Endothelial cell of umbilical vein (primary cell): ENCODE measurements at regions of chr2 and their contacts with region 1.

Region 1: DNA sequence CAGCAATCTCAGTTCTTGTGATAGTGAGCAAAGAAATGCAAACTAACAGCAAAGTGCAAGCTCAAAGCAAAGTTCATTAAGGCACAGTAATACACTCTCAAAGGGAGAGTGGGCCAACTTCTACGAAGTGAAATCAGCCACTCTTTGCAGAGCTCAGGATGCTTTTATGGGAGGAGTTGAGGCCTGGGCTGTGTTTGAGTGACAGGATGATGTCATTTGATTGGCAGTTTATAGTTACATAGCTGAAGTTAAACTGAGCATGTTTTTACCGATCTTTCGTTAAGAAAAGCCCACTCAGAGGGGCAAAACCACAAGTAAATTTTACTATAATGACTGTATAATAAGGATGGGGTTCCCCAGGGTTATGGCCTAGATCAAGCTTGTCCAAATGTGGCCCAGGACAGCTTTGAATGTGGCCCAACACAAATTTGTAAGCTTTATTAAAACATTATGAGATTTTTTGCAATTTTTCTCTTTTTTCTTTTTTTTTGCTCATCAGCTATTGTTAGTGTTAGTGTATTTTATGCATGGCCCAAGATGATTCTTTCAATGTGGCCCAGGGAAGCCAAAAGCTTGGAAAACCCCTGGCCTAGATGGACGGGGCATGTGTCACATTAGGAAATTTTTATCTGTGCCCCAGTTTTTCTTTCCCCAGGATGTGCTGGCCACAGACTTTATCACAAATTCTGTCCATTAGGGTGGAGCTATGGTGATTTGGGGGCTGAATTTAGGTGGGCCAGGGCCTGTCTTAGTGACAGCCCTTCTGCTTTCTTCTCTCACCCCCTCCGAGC is 8.3 kb upstream of the DNAH7 start:
- DNase-seq: no peak
- H3K4me3 ChIP-seq: no peak overlapping the region
- H3K27ac ChIP-seq: no peak overlapping the region
- H3K4me1 ChIP-seq: no peaks in the 10 kb centered on the region
- H3K27me3 ChIP-seq: peaks cover 7 to 12% of the 10 kb centered on the region in 2 experiments
- CTCF ChIP-seq: no peak
- POLR2A ChIP-seq: no peak

Region 2: DNA sequence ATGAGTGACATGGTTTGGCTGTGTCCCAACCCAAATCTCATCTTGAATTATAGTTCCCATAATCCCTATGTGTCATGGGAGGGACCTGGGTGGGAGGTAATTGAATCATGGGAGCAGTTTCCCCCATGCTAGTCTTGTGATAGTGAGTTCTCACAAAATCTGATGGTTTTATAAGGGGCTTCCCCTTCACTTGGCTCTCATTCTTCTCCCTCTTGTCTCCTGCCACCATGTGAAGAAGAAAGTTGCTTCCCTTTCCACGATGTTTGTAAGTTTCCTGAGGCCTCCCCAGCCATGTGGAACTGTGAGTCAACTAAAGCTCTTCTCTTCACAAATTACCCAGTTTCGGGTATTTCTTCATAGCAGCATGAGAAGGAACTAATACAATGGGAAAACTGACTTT is 22.3 kb before region 1 on chr2:
- CTCF ChIA-PET with region 1: no interaction called
- POLR2A ChIA-PET with region 1: no interaction called
- dilution Hi-C with region 1: no loop called
- intact Hi-C with region 1: no loop called
- DNase-seq: no peak
- H3K4me3 ChIP-seq: no peak overlapping the region
- H3K27ac ChIP-seq: no peak overlapping the region
- H3K4me1 ChIP-seq: no peaks in the 10 kb centered on the region
- H3K27me3 ChIP-seq: peaks cover 8 to 16% of the 10 kb centered on the region in 2 experiments
- CTCF ChIP-seq: no peak
- POLR2A ChIP-seq: no peak

Region 3: DNA sequence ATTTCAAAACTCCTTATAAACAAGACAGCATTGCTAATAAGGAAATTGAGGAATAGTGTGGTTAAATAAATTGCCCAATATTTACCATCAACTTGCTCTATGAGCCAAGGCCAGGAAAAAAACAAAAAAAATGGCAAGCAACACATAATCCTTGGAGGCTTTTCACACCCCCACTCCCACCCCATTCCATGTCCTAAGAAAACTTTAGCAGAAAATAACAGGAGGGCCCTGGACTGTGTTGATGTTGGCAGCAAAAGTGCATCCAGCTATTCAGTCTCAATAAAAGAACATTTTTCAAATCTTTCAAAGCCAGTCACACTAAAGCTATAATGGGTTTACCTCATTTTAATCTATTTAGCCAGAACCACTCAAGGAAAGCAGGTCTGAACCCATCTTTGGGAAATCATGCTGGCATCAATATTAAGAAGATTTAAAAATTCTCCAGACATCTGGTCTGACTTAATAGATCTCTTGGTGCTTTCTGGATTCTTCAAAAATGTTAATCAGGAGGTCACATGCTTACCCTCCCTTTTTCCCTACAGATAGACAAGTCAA is 129.0 kb after region 1 on chr2:
- CTCF ChIA-PET with region 1: interaction called, 21 read pairs
- POLR2A ChIA-PET with region 1: no interaction called
- dilution Hi-C with region 1: no loop called
- intact Hi-C with region 1: no loop called
- DNase-seq: peak; percentile 58
- H3K4me3 ChIP-seq: no peak overlapping the region
- H3K27ac ChIP-seq: no peak overlapping the region
- H3K4me1 ChIP-seq: peaks cover 20% of the 10 kb centered on the region
- H3K27me3 ChIP-seq: no peaks in the 10 kb centered on the region
- CTCF ChIP-seq: no peak
- POLR2A ChIP-seq: no peak

Region 4: GRCh38 chr2:196233021-196233804 is 156.2 kb after region 1 on chr2:
- CTCF ChIA-PET with region 1: interaction called, 15 read pairs
- POLR2A ChIA-PET with region 1: no interaction called
- dilution Hi-C with region 1: no loop called
- intact Hi-C with region 1: no loop called
- DNase-seq: peak; percentile 93
- H3K4me3 ChIP-seq: peak overlapping the region in 1 of 3 experiments; percentile 2
- H3K27ac ChIP-seq: peak overlapping the region; percentile 96
- H3K4me1 ChIP-seq: peaks cover 32% of the 10 kb centered on the region
- H3K27me3 ChIP-seq: no peaks in the 10 kb centered on the region
- CTCF ChIP-seq: no peak
- POLR2A ChIP-seq: no peak

Region 5: DNA sequence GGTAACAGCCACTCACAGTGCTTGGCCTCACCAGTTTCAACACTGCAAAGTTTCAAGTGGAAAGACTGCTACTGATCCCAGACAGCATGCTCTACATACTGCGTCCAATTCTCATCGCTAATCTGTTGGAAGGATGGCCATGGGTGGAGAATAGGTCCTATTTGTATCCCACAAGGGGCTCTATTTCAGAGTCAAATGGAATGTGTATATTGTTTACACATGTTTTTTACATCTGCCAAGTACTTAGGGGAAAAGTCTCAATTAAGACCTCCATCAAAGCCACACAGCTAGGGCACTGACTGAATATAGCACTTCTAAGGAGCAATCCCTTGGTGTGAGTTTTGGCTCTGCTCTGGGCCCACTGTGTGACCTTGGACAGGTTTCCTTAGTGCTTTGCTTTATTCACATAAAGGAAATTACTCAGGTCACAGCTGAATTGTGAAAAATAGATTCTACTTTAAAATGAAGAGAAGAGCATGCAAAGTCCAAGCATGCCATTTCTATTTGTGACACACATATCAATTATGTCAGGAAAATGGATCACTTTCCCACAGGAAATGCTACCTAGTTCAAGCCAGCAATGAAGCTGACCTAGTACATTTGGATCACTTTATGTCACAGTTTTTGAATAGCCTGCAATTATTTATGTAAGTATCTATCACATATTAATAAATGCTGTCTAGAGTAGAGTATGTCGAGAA is 207.3 kb after region 1 on chr2:
- CTCF ChIA-PET with region 1: interaction called, 59 read pairs
- POLR2A ChIA-PET with region 1: interaction called, 3 read pairs
- dilution Hi-C with region 1: no loop called
- intact Hi-C with region 1: no loop called
- DNase-seq: peak; percentile 74
- H3K4me3 ChIP-seq: no peak overlapping the region
- H3K27ac ChIP-seq: peak overlapping the region; percentile 45
- H3K4me1 ChIP-seq: peaks cover 47% of the 10 kb centered on the region
- H3K27me3 ChIP-seq: no peaks in the 10 kb centered on the region
- CTCF ChIP-seq: no peak
- POLR2A ChIP-seq: no peak

Region 6: DNA sequence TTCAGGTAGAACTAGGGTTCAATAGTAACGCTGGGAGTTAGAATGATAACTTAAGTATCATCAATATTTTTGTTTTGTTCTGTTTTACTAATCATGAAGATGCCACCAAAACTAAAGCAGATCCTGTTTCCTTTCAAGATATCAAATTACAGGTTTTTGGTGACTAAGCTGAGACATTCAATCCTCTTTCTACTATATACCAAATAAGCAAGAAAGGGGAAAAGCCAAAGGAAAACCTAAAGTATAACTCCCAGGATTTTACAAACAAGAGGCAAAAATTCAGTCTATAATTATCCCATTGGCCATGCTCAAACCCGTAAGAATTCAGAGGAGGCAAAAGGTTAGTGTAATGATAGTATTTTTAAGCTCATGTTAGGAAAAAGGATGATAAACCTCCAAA is 387.3 kb after region 1 on chr2:
- CTCF ChIA-PET with region 1: interaction called, 12 read pairs
- POLR2A ChIA-PET with region 1: no interaction called
- dilution Hi-C with region 1: no loop called
- intact Hi-C with region 1: no loop called
- DNase-seq: no peak
- H3K4me3 ChIP-seq: no peak overlapping the region
- H3K27ac ChIP-seq: no peak overlapping the region
- H3K4me1 ChIP-seq: no peaks in the 10 kb centered on the region
- H3K27me3 ChIP-seq: peaks cover 7 to 10% of the 10 kb centered on the region in 2 experiments
- CTCF ChIP-seq: no peak
- POLR2A ChIP-seq: no peak